Activated T-helper 1 cell treated with anti-CD3 and anti-CD28 coated beads, Interleukin-12 subunit alpha, Interleukin-12 subunit beta, Interleukin-2, Interleukin-4 antibody, amounts not matched to agents 30 ng/mL and 10 ng/mL and 1 ng/mL, durations not matched to agents 14 hours and 24 hours and 36 hours (primary cell): ENCODE measurements at regions of chr10 and their contacts with region 1.

Region 1: GRCh38 chr10:123132576-123133477 is 2.9 kb upstream of the HMX3 start:
- DNase-seq: peak; percentile 74
- H3K4me3 Mint-ChIP-seq: peak overlapping the region; percentile 48
- H3K27ac Mint-ChIP-seq: peak overlapping the region; percentile 85
- H3K4me1 Mint-ChIP-seq: peaks cover 23% of the 10 kb centered on the region
- H3K27me3 Mint-ChIP-seq: peaks cover 74% of the 10 kb centered on the region

Region 2: DNA sequence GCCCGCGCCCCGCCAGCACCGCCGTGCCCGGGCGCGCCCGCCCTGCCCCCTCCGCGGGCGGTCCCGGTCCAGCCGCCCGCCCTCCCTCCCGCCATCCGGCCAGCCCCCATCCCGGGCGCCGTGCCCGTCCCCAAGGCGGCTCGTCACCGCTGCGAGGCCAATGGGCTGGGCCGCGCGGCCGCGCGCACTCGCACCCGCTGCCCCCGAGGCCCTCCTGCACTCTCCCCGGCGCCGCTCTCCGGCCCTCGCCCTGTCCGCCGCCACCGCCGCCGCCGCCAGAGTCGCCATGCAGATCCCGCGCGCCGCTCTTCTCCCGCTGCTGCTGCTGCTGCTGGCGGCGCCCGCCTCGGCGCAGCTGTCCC is 671.5 kb before region 1 on chr10 and contains the start of gene HTRA1:
- intact Hi-C with region 1: loop called (anchors 10 kb)
- DNase-seq: no peak
- H3K4me3 Mint-ChIP-seq: peak within 1 kb of the TSS; percentile 73
- H3K27ac Mint-ChIP-seq: no peak within 1 kb of the TSS
- H3K4me1 Mint-ChIP-seq: peaks cover 5% of the 10 kb centered on the region
- H3K27me3 Mint-ChIP-seq: peaks cover 67% of the 10 kb centered on the region
- total RNA-seq, gene HTRA1: not detected in 2 replicates

Region 3: DNA sequence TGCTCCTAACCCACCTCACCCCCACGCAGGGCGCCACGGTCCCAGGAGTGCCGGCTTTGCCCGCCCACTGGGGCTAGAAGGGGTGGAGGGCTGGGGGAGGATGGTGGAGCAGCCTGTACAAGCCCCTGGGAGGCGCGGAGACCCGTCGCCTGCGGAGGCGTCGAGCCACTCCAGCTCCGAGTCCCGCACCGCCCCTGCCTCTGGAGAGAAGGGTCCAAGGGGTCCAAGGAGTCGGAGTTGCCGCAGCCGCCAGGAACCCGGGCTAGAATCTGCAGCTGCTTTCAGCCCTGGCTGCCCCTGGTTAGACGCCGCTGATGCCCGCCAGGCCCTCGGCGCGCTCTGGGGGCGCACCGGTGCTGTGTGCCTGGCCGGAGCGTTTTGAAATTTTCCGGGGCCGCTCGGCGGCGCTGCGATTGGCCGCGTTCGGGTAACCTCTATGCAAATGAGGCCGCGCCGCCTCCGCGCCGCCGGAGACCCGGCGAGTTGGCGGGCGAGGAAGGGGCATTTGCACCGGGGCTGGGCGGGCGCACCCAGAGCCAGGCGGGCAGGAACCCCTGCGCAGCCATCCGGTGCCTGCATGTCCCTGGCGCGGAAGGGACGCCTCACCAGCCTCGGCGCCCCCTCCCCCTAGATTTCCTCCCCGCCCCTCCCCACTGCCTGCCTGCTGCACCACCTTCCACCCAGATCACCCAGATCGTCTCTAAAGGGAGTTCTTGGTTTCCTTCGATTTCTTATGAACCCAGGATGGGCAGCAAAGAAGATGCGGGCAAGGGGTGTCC is 15.0 kb after region 1 on chr10 and contains the start of gene HMX2:
- intact Hi-C with region 1: loop called (anchors 1 kb)
- DNase-seq: no peak
- H3K4me3 Mint-ChIP-seq: peak within 1 kb of the TSS; percentile 57
- H3K27ac Mint-ChIP-seq: peak within 1 kb of the TSS; percentile 78
- H3K4me1 Mint-ChIP-seq: peaks cover 43% of the 10 kb centered on the region
- H3K27me3 Mint-ChIP-seq: peaks cover 59% of the 10 kb centered on the region
- total RNA-seq, gene HMX2: not detected in 2 replicates

Region 4: DNA sequence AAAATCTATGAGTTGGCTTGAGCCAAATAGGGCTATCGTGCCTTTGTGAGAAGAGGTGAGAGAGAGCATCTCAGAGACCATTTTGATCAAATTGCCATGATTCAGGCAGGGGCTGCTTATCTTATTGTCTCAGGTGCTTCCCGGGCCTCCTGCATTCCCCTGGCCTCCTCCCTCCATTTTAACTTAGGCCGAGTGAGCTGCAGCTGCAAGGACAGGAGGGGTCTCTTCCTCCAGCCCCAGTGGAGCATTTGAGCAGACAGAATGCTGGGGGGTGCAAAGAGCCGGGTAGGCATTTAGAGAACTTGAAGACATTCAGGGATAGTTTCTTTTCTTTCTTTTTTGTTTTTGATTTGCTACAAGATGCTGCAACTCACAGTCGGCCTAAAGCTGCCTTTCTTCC is 80.4 kb after region 1 on chr10:
- intact Hi-C with region 1: no loop called
- DNase-seq: no peak
- H3K4me3 Mint-ChIP-seq: no peak overlapping the region
- H3K27ac Mint-ChIP-seq: no peak overlapping the region
- H3K4me1 Mint-ChIP-seq: no peaks in the 10 kb centered on the region
- H3K27me3 Mint-ChIP-seq: no peaks in the 10 kb centered on the region

Region 5: DNA sequence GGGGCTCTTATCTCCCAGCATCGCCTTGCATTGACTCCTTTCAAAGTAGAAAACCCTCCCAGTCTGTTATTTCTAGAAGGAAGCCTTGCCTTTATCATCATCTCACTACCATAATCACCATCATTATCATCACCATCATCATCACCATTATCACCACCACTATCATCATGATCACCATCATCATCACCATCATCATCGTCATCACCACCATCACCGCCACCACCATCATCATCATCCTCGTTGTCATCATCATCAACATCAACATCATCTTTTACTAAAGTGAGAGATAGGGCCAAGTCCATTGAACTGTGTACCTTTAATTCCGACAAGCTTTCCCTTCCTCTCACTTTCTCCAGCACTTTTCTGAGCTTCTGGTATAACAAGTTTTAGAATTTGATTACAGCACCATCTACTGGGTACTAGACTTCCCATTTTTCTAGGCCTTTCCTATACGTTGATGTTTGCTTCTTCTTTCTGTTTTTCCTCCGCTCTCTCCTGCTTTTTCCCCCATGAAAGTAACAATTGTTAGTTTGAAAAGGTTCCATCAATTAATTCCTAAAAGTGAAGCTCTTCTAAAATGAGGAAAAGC is 247.8 kb after region 1 on chr10:
- intact Hi-C with region 1: loop called (anchors 1 kb)
- DNase-seq: no peak
- H3K4me3 Mint-ChIP-seq: no peak overlapping the region
- H3K27ac Mint-ChIP-seq: no peak overlapping the region
- H3K4me1 Mint-ChIP-seq: no peaks in the 10 kb centered on the region
- H3K27me3 Mint-ChIP-seq: no peaks in the 10 kb centered on the region

Region 6: GRCh38 chr10:123967396-123968243 is 834.8 kb after region 1 on chr10:
- intact Hi-C with region 1: loop called (anchors 10 kb)
- DNase-seq: peak; percentile 20
- H3K4me3 Mint-ChIP-seq: no peak overlapping the region
- H3K27ac Mint-ChIP-seq: no peak overlapping the region
- H3K4me1 Mint-ChIP-seq: no peaks in the 10 kb centered on the region
- H3K27me3 Mint-ChIP-seq: peaks cover 24% of the 10 kb centered on the region